ENCODE measurements at regions of chr14 and their contacts with region 1.

Region 1: DNA sequence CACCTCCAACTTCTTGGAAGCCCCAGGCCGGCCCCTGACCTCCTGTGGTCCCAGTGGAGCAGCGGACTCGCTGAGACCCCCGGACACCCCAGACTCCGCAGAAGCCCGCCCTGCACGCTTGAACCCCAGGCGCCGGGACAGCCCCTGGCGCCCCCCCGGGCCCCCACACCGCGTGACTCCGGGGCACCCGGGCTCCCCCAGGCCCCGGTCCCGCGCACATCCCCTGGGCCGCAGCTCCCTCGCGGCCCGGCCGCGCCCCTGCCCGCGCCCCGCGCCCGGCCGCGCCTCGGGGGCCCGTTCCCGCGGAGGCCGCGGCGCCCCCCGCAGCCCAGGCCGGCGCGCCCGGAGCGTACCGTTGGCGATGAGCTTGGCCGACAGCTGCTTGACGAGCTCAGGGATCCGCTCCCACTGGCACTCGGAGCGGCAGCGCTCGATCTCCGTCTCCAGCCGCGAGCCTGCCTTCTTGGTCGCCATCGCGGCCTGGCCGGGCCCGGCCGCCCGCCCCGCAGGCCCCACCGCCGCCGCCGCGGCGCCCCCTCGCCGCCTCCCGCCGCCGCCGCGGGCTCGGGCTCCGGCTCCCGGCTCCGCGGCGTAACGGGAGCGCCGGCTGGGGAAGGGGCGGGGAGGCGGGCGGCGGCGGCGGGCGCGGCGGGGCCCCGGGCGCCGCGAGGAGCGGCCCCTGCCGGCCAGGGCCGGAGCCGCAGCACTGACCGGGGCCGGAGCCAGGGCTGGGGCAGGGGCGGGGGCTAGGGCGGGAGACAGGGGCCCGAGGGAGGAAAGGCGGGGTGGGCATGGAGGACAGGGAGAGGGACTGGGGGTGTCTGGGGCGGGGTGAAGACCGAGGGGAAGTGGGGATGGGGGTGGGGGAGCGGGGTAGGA is at the start of gene TTC7B:
- DNase-seq: peak; percentile 5
- H3K4me3 ChIP-seq: peak within 1 kb of the TSS; percentile 69 to 82 (median 72)
- H3K27ac ChIP-seq: no peak within 1 kb of the TSS
- H3K4me1 ChIP-seq: peaks cover 9% of the 10 kb centered on the region
- H3K27me3 ChIP-seq: no peaks in the 10 kb centered on the region
- CTCF ChIP-seq: peak in 1 of 2 donors; percentile 47
- total RNA-seq, gene TTC7B: 15.2 to 29.3 TPM

Region 2: GRCh38 chr14:90758028-90758889 is 57.8 kb before region 1 on chr14:
- CTCF ChIA-PET with region 1: no interaction called
- dilution Hi-C with region 1: no loop called
- in situ Hi-C with region 1: no loop called
- intact Hi-C with region 1: loop called (anchors 5 kb)
- DNase-seq: peak; percentile 88
- H3K4me3 ChIP-seq: peak overlapping the region; percentile 44 to 53 (median 45)
- H3K27ac ChIP-seq: peak overlapping the region; percentile 55
- H3K4me1 ChIP-seq: peaks cover 7% of the 10 kb centered on the region
- H3K27me3 ChIP-seq: no peaks in the 10 kb centered on the region
- CTCF ChIP-seq: peak; percentile 57 to 90